ENCODE measurements at regions of chr14 and their contacts with region 1.

Region 1: GRCh38 chr14:70027785-70028428 is 148.7 kb downstream of the SMOC1 start:
- ATAC-seq: peak; percentile 69 to 98 (median 92)
- H3K4me3 ChIP-seq: no peak overlapping the region
- H3K27ac ChIP-seq: no peak overlapping the region
- H3K4me1 ChIP-seq: no peaks in the 10 kb centered on the region

Region 2: GRCh38 chr14:69827560-69827959 is 200.3 kb before region 1 on chr14:
- in situ Hi-C with region 1: loop called in 5 of 9 experiments (anchors 10 to 25 kb)
- ATAC-seq: peak in 2 of 8 experiments; percentile 40 to 82
- H3K4me3 ChIP-seq: no peak overlapping the region
- H3K27ac ChIP-seq: no peak overlapping the region
- H3K4me1 ChIP-seq: no peaks in the 10 kb centered on the region

Region 3: GRCh38 chr14:69845787-69846186 is 182.1 kb before region 1 on chr14:
- in situ Hi-C with region 1: loop called in 1 of 9 experiments (anchors 25 kb)
- ATAC-seq: peak in 3 of 8 experiments; percentile 15 to 26 (median 24)
- H3K4me3 ChIP-seq: no peak overlapping the region
- H3K27ac ChIP-seq: no peak overlapping the region
- H3K4me1 ChIP-seq: peaks cover 41% of the 10 kb centered on the region in 2 donors